ENCODE measurements at regions of chr16 and their contacts with region 1.

Region 1: GRCh38 chr16:28081391-28081968 is 18.0 kb upstream of the GSG1L start:
- DNase-seq: no peak
- H3K4me3 Mint-ChIP-seq: no peak overlapping the region
- H3K27ac Mint-ChIP-seq: no peak overlapping the region
- H3K4me1 Mint-ChIP-seq: no peaks in the 10 kb centered on the region
- H3K27me3 Mint-ChIP-seq: no peaks in the 10 kb centered on the region

Region 2: GRCh38 chr16:27918755-27919154 is 162.7 kb before region 1 on chr16:
- CTCF ChIA-PET with region 1: no interaction called
- POLR2A ChIA-PET with region 1: no interaction called
- DNase-seq: no peak
- H3K4me3 Mint-ChIP-seq: no peak overlapping the region
- H3K27ac Mint-ChIP-seq: no peak overlapping the region
- H3K4me1 Mint-ChIP-seq: no peaks in the 10 kb centered on the region
- H3K27me3 Mint-ChIP-seq: peaks cover 21% of the 10 kb centered on the region

Region 3: GRCh38 chr16:28011971-28012445 is 69.5 kb before region 1 on chr16:
- CTCF ChIA-PET with region 1: no interaction called
- POLR2A ChIA-PET with region 1: no interaction called
- DNase-seq: no peak
- H3K4me3 Mint-ChIP-seq: no peak overlapping the region
- H3K27ac Mint-ChIP-seq: no peak overlapping the region
- H3K4me1 Mint-ChIP-seq: peaks cover 6% of the 10 kb centered on the region
- H3K27me3 Mint-ChIP-seq: peaks cover 13% of the 10 kb centered on the region

Region 4: GRCh38 chr16:28069971-28070794 is 11.3 kb before region 1 on chr16:
- CTCF ChIA-PET with region 1: interaction called, 10 read pairs
- POLR2A ChIA-PET with region 1: interaction called, 4 read pairs
- DNase-seq: no peak
- H3K4me3 Mint-ChIP-seq: no peak overlapping the region
- H3K27ac Mint-ChIP-seq: no peak overlapping the region
- H3K4me1 Mint-ChIP-seq: no peaks in the 10 kb centered on the region
- H3K27me3 Mint-ChIP-seq: peaks cover 15% of the 10 kb centered on the region

Measured in activated CD4-positive, alpha-beta memory T cell treated with anti-CD3 and anti-CD28 coated beads, Interleukin-2, amount 10 ng/mL, durations not matched to agents 7 days and 5 days (primary cell).